ENCODE measurements at regions of chr11 and their contacts with region 1.

Region 1: GRCh38 chr11:70899616-70900015 is 352.8 kb downstream of the SHANK2 start:
- DNase-seq: no peak
- ATAC-seq: no peak

Region 2: GRCh38 chr11:70717936-70718595 is 181.6 kb before region 1 on chr11:
- intact Hi-C with region 1: no loop called
- DNase-seq: peak; percentile 22
- ATAC-seq: no peak

Region 3: DNA sequence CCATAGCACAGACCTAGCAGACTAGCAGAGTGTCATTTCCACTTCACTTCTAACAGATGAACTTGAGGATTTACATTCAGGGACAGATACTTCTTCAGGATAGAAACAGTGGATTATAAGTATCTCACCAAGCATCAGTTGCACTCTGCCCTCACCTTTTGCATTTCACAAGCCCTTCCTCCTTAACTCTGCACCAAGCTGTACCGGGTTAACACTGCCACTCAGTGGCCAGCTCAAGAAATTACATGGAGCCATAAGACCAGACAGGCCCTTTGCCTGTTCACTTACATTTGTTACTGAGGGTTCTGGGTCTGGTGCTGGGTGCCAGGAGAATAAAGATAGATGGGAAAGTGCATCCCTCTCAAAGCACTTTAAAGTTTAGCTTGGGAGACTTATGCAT is 43.0 kb after region 1 on chr11:
- intact Hi-C with region 1: loop called (anchors 2 kb)
- DNase-seq: no peak
- ATAC-seq: no peak

Region 4: DNA sequence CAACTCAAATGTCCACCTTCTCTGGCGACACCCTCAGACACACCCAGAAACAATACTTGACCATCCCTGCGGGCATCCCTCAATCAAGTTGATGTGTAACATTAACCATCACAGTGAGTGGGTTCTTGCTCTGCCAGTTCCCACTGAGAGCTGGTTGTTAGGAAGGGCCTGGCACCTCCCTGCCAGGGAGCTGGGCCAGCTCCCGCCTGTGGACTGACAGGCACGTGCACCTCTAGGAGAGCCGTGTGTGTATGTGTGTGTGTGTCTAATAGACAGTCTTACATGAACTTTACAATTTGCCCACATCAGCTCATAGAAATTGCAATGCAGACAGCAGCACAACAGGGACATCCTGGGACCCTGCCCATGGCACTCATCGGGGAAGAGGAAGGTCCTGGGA is 54.1 kb after region 1 on chr11:
- intact Hi-C with region 1: no loop called
- DNase-seq: no peak
- ATAC-seq: peak; percentile 84

Region 5: GRCh38 chr11:71096751-71097388 is 197.3 kb after region 1 on chr11:
- intact Hi-C with region 1: no loop called
- DNase-seq: no peak
- ATAC-seq: no peak

Measured in Right ventricle myocardium inferior (tissue), 1 donor.